Dorsolateral prefrontal cortex (tissue), 120 donors: ENCODE measurements at regions of chr4 and their contacts with region 1.

Region 1: DNA sequence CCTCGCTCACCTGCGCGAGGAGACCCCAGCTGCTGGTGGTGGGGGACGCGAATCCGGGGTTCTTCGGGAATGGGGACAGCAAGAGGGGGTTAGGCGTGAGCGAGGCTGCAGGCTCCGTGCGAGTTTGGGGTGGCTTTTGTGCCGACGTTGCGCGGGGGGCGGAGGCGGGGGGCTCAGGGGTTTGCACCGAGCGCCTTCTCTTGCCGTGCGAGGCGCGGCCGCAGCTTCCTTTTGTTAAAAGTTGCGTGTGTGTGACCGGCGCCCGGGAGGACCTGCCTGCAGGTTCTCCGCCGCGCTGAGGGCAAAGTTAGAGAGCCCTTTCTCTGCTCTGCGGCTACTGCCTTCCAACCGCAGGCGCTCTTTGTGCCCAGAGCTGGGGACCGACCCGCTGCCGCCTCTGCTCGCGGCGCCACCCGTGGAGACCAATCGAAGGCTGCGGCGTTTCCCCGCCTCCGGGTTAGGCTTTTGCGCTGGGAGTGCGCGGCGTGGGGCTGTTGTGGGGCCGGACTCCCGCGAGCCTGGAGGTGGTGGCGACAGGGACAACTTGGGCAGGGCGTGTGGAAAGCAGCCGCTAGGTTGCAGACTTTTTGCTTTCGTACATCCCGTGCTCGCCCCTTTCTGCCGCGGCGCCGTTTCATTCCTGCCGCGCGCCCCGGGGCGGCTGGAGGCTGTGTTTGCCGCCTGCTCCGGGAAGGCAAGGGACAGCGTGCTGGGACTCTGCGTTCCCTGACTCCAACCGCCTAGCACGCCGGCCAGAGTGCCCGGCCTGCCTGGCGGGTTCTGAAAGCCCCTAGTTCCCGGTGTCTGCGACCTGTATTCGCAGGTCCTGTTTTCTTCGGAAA is 716 bp downstream of the KIT start:
- DNase-seq: peak in 9 of 10 donors; percentile 7 to 72 (median 53)
- H3K4me3 ChIP-seq: peak overlapping the region; percentile 45 to 88 (median 71)
- H3K27ac ChIP-seq: peak overlapping the region in 16 of 59 donors; percentile 1 to 81 (median 47)
- H3K27me3 ChIP-seq: peaks cover 0 to 48% (median 12%) of the 10 kb centered on the region in 45 donors
- CTCF ChIP-seq: peak in 46 of 56 donors; percentile 10 to 62 (median 40)

Region 2: DNA sequence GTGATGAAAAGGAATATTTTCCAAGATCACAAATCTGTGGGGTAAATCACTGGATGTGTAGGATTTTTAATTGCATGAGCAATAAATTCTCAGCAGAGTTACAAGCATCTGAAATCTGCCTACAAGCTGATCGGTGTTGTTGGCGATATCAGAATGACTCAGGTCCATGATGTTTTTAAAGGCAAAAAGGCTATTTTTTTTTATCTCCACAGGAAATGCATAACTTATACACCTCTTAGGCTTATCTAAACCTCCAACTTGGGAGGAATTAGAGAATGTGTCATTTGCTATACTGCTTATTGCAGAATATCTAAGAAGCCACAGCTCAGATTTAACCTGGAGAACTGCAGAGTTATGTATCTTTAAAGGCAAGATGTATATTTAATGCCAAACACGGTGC is 60.9 kb after region 1 on chr4:
- intact Hi-C with region 1: loop called in 1 of 2 experiments (anchors 5 kb)
- DNase-seq: no peak
- H3K4me3 ChIP-seq: no peak overlapping the region
- H3K27ac ChIP-seq: no peak overlapping the region
- H3K27me3 ChIP-seq: peaks cover 0 to 6% (median 0%) of the 10 kb centered on the region in 45 donors
- CTCF ChIP-seq: no peak

Region 3: GRCh38 chr4:54742636-54743399 is 84.3 kb after region 1 on chr4:
- intact Hi-C with region 1: loop called in 1 of 2 experiments (anchors 5 kb)
- DNase-seq: no peak
- H3K4me3 ChIP-seq: no peak overlapping the region
- H3K27ac ChIP-seq: peak overlapping the region in 1 of 59 donors; percentile 80
- H3K27me3 ChIP-seq: peaks cover 0 to 3% (median 0%) of the 10 kb centered on the region in 45 donors
- CTCF ChIP-seq: no peak

Region 4: GRCh38 chr4:54784161-54784671 is 125.7 kb after region 1 on chr4:
- intact Hi-C with region 1: loop called (anchors 5 to 10 kb)
- DNase-seq: peak; percentile 11 to 90 (median 80)
- H3K4me3 ChIP-seq: peak overlapping the region in 16 of 59 donors; percentile 1 to 36 (median 14)
- H3K27ac ChIP-seq: peak overlapping the region; percentile 40 to 94 (median 82)
- H3K27me3 ChIP-seq: no peaks in the 10 kb centered on the region
- CTCF ChIP-seq: peak in 4 of 56 donors; percentile 14 to 35 (median 20)

Region 5: GRCh38 chr4:54840992-54841768 is 182.7 kb after region 1 on chr4:
- intact Hi-C with region 1: loop called (anchors 5 to 10 kb)
- DNase-seq: peak in 4 of 10 donors; percentile 15 to 47 (median 38)
- H3K4me3 ChIP-seq: no peak overlapping the region
- H3K27ac ChIP-seq: peak overlapping the region in 4 of 59 donors; percentile 10 to 42 (median 20)
- H3K27me3 ChIP-seq: no peaks in the 10 kb centered on the region
- CTCF ChIP-seq: peak in 35 of 56 donors; percentile 16 to 57 (median 32)

Region 6: GRCh38 chr4:54961357-54961975 is 303.0 kb after region 1 on chr4:
- intact Hi-C with region 1: loop called in 1 of 2 experiments (anchors 10 kb)
- DNase-seq: no peak
- H3K4me3 ChIP-seq: no peak overlapping the region
- H3K27ac ChIP-seq: no peak overlapping the region
- H3K27me3 ChIP-seq: peaks cover 0 to 3% (median 0%) of the 10 kb centered on the region in 45 donors
- CTCF ChIP-seq: peak; percentile 23 to 76 (median 62)